CD8-positive, alpha-beta T cell (primary cell): ENCODE measurements at regions of chr1 and their contacts with region 1.

Region 1: DNA sequence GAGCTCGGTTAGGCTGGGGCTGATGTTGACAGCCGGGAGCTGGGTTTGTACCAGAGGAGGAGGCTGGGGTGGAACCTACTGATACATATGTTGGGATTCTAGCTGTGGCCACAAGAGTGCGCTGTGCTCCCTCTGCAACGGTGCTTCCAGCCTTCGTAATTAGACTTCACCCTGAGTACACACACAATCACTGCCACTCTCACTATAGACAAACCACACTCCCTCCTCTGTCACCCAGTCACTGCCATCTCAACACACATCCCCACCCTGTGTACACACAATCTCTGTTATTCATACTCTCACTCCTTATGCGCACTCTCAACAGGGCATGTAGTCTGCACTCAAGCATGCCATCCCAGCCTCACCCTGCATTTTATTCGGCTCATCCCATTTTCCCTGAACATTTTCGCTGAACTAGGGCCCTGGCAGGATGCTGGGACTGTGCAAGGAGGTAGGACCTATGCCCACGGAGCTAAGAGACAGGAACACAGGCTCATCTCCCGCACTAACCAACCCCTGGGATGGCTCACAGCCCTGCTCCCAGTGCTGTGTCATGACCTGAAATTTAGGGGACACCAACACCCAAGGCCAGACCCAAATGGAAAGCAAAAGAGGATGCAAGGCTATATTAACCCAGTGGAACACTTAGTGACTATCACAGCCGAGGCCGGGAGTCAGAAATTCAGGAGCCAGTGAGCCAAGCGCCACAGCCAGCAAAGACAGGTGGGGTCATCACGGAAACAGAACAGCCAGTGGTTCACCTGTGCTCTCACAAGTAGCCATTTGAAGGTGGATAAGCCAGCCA is 5.7 kb downstream of the GJB3 start:
- DNase-seq: peak; percentile 25 to 76 (median 59)
- ATAC-seq: peak; percentile 89
- H3K4me3 ChIP-seq: no peak overlapping the region
- H3K4me3 Mint-ChIP-seq: no peak overlapping the region
- H3K27ac ChIP-seq: no peak overlapping the region
- H3K27ac Mint-ChIP-seq: no peak overlapping the region
- H3K4me1 ChIP-seq: no peaks in the 10 kb centered on the region
- H3K4me1 Mint-ChIP-seq: peaks cover 3% of the 10 kb centered on the region
- H3K27me3 ChIP-seq: peaks cover 9% of the 10 kb centered on the region in 2 experiments
- H3K27me3 Mint-ChIP-seq: peaks cover 51% of the 10 kb centered on the region
- CTCF ChIP-seq: peak; percentile 79

Region 2: DNA sequence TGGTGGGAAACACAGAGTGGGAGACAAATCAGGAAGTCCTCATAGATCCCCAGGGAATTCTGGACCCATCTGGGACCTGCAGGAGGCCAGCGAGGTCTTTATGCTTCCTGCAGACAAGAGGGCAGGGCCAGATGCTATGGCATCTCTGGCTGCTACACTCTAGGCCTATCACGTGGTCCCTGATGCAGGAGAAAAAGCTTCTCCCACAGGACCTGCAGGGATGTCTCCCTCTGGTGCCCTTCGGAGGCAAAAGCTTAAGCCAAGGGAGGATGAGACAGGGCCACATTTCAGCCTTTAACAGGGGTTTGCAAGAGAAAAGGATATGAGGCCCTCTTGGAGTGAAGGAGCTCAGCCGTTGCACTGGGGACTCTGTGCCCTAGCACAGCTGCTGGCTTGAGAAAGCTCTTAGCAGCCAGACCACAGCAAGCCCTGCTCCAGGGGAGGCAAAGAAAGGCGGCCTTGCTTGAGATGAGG is 367.0 kb before region 1 on chr1:
- CTCF ChIA-PET with region 1: no interaction called
- POLR2A ChIA-PET with region 1: no interaction called
- intact Hi-C with region 1: no loop called
- DNase-seq: no peak
- ATAC-seq: no peak
- H3K4me3 ChIP-seq: no peak overlapping the region
- H3K4me3 Mint-ChIP-seq: no peak overlapping the region
- H3K27ac ChIP-seq: no peak overlapping the region
- H3K27ac Mint-ChIP-seq: no peak overlapping the region
- H3K4me1 ChIP-seq: no peaks in the 10 kb centered on the region
- H3K4me1 Mint-ChIP-seq: no peaks in the 10 kb centered on the region
- H3K27me3 ChIP-seq: no peaks in the 10 kb centered on the region
- H3K27me3 Mint-ChIP-seq: peaks cover 23% of the 10 kb centered on the region
- CTCF ChIP-seq: no peak

Region 3: DNA sequence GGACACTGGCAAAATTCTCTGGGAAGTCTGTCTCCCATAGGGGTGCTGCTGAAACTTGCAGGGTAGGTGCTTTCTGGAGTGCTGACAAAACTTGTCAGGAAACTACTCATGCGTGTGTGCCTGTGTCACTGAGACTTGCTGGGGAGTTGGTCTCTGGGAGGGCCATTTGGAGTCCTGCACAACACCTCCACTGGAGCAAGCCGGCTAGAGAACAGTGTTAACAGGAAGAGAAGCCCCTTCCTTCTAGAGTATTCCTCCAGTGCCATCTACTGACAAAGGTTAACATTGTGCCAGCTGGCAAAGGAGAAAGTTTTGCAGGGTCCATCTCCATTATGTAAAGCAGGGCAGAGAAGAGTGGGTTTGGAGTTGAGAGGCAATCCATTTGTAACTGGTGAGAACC is 511.7 kb after region 1 on chr1:
- CTCF ChIA-PET with region 1: interaction called, 3 read pairs
- POLR2A ChIA-PET with region 1: no interaction called
- intact Hi-C with region 1: loop called in 1 of 2 experiments (anchors 1 kb)
- DNase-seq: peak in 7 of 9 experiments; percentile 16 to 72 (median 24)
- ATAC-seq: peak; percentile 96
- H3K4me3 ChIP-seq: no peak overlapping the region
- H3K4me3 Mint-ChIP-seq: no peak overlapping the region
- H3K27ac ChIP-seq: no peak overlapping the region
- H3K27ac Mint-ChIP-seq: peak overlapping the region; percentile 45
- H3K4me1 ChIP-seq: peaks cover 5% of the 10 kb centered on the region
- H3K4me1 Mint-ChIP-seq: peaks cover 14% of the 10 kb centered on the region
- H3K27me3 ChIP-seq: no peaks in the 10 kb centered on the region
- H3K27me3 Mint-ChIP-seq: no peaks in the 10 kb centered on the region
- CTCF ChIP-seq: peak; percentile 59